Posterior vena cava (tissue), 2 donors: ENCODE measurements at regions of chr12 and their contacts with region 1.

Region 1: DNA sequence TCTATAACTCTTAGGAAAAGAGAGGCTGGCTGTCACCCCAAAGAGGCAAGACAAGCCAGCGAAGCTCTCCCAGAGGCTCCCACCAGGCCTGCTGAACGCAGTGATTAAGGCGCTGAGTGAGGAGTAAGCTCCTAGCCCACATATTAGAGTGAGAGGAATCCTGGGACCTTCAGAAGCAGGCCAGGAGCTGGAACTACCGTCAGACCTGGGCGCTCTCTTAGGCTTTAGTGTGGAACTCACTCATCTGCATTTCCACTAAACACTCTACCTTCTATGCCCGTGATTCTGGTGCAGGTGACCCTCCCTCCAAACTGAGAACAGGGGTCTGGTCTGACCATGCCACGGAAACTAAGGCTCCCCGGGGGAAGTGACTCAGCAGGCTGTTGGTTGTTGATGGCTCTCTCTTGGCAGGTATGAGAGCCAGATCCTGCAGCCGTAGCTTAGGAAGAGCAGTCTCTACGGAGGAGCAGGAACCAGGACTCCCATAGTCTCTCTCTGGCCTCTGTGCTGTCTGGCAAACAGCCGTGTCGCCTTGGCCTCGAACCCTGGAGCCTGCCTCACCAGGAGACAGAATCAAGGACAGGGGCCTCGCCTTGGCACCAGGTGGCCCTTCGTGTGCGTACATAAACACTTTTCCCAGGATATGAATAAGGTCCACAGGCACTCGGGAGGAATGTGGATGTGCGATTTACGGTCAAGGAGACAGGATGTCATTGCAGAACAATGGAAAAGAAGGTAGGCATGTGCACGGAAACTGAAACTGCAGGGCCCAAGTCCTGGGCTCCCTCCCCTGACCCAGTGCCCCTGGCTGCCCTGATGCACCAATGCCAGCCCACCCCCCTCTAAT is 8.1 kb downstream of the VWF start:
- DNase-seq: peak; percentile 70

Region 2: GRCh38 chr12:6145564-6145963 is 29.2 kb after region 1 on chr12:
- intact Hi-C with region 1: loop called in 1 of 2 experiments (anchors 1 kb)
- DNase-seq: no peak